ENCODE measurements at regions of chr3 and their contacts with region 1.

Region 1: DNA sequence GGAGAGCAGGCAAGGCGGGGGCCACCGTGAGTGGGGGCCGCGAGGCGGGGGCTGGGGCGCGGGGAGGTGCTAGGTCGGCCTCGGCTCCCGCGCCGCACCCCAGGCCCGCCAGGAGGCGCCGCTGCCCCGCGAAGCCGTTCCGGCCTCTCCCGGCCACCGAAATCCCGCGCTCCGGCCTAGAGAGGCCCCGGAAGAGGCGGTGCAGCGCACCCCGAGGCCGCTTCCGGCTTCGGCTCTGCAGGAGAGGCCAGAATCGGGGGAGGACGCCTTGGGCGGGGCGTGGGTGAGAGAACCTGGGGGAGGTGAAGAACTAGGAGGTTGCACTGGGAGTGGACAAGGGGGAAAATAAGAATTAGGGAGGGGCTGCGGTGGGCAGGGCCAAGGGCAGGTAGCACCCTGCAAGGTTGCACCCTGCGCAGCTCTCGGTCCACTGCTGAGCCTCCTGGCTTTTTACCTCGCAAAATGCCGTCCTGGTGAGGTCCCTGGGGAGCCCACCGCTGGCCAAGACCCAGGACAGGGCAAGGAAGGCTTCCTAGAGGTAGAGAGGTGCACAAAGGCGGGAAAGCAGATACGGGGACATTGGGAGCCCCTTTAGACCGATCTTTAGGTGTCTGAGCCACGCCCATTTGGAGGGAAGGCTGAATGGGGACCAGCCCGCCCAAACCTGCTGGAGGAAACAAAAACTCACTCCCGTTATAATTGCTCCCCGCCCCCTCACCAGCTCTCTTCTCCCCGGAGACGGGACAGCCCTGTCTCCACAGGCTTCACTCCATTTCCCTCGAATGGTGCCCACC is 8.4 kb upstream of the GNAI2 start:
- DNase-seq: peak; percentile 95
- H3K4me3 ChIP-seq: peak overlapping the region; percentile 55 to 73 (median 62)
- H3K27ac ChIP-seq: peak overlapping the region; percentile 70 to 77 (median 76)
- H3K4me1 ChIP-seq: peaks cover 0 to 28% (median 22%) of the 10 kb centered on the region in 4 donors
- H3K27me3 ChIP-seq: no peaks in the 10 kb centered on the region
- CTCF ChIP-seq: peak in 3 of 4 experiments; percentile 48 to 97 (median 60)
- EP300 ChIP-seq: no peak
- POLR2A ChIP-seq: peak; percentile 8 to 41

Region 2: GRCh38 chr3:50121416-50122032 is 106.1 kb before region 1 on chr3:
- intact Hi-C with region 1: loop called (anchors 2 kb)
- DNase-seq: peak; percentile 89
- H3K4me3 ChIP-seq: no peak overlapping the region
- H3K27ac ChIP-seq: no peak overlapping the region
- H3K4me1 ChIP-seq: peaks cover 0 to 36% (median 28%) of the 10 kb centered on the region in 4 donors
- H3K27me3 ChIP-seq: no peaks in the 10 kb centered on the region
- CTCF ChIP-seq: peak; percentile 65 to 90 (median 85)
- EP300 ChIP-seq: no peak
- POLR2A ChIP-seq: no peak

Region 3: DNA sequence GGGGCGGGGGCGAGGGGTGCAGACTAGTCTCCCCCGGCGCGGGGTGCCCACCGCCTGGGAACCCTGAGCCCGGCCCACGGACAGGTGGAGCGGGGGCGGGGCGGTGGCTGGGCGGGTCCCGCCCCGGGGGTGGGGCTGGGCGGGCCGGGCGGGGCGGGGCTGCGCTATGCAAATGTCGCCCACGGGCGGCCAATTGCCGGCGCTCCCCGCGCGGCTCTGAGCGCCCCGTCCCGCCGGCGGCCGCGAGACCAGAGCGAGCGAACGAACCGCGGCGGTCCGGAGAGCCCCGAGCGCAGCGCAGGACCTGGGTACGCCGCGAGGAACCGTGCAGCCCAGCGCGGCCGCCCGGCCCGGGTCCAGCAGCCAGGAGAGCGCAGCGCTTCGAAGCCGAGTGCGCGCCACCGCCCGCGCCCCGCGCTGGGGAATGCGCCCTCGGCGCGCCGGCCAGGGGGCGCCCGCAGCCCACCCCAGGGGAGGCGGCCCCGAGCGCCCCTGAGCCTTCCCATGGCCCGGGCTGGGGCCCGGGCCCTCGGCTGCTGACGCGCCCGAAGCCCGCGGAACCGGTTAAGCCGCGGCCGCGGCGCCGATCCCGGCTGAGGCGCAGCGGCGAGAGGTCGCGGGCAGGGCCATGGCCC is 72.6 kb before region 1 on chr3 and contains the start of gene SEMA3F:
- intact Hi-C with region 1: no loop called
- DNase-seq: peak; percentile 74
- H3K4me3 ChIP-seq: peak within 1 kb of the TSS; percentile 23 to 65 (median 58)
- H3K27ac ChIP-seq: peak within 1 kb of the TSS; percentile 60 to 90 (median 86)
- H3K4me1 ChIP-seq: peaks cover 0 to 51% (median 48%) of the 10 kb centered on the region in 4 donors
- H3K27me3 ChIP-seq: peaks cover 0 to 7% (median 4%) of the 10 kb centered on the region in 3 donors
- CTCF ChIP-seq: no peak
- EP300 ChIP-seq: no peak
- POLR2A ChIP-seq: no peak
- total RNA-seq, gene SEMA3F: 5.1 to 11.4 (median 8.0) TPM

Region 4: DNA sequence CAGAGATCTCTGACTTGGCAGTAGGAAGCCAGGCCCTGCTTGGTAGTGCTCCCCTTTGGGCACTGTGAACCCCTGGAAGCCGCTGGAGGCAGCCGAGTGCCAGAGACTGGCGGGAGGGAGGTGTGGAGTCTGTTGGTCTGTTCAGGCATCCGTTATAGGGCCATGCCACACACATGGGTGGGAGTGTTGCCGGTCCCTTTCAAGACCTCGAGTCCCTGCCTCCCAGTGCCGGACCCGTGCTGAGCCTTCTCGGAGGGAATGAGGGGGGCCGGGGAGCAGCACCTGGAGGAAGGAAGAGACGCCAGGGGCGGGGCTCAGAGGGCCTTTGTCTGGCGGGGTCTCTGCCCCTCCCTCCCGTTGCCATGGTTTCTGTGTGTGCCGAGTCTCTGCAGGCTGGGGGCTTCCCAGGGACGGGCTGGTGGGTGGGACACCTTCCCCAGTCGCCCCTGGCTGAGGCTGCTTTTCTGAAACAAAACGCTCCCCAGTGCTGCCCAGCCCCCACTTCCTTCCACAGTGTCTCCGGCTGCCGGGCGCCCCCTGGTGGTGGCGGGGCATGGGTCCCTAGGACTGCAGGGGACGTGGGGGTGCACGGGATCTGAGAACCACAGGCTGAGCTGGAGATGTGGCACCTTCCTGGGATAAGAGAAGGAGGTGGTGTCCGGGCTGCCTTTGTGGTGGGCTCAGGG is 18.4 kb after region 1 on chr3:
- intact Hi-C with region 1: loop called (anchors 1 kb)
- DNase-seq: peak; percentile 95
- H3K4me3 ChIP-seq: peak overlapping the region; percentile 24 to 52 (median 44)
- H3K27ac ChIP-seq: peak overlapping the region; percentile 76 to 91 (median 85)
- H3K4me1 ChIP-seq: peaks cover 0 to 99% (median 89%) of the 10 kb centered on the region in 4 donors
- H3K27me3 ChIP-seq: no peaks in the 10 kb centered on the region
- CTCF ChIP-seq: peak; percentile 94 to 99 (median 98)
- EP300 ChIP-seq: no peak
- POLR2A ChIP-seq: no peak

Region 5: GRCh38 chr3:50272911-50273693 is 45.5 kb after region 1 on chr3:
- intact Hi-C with region 1: loop called (anchors 1 kb)
- DNase-seq: peak; percentile 92
- H3K4me3 ChIP-seq: peak overlapping the region in 3 of 4 donors; percentile 31 to 45 (median 35)
- H3K27ac ChIP-seq: peak overlapping the region in 3 of 4 donors; percentile 48 to 99 (median 65)
- H3K4me1 ChIP-seq: peaks cover 0 to 43% (median 36%) of the 10 kb centered on the region in 4 donors
- H3K27me3 ChIP-seq: peaks cover 0 to 21% (median 0%) of the 10 kb centered on the region in 3 donors
- CTCF ChIP-seq: peak; percentile 97 to 99 (median 99)
- EP300 ChIP-seq: no peak
- POLR2A ChIP-seq: no peak

Measured in sigmoid colon (tissue), 7 donors.